ENCODE measurements at regions of chrX and their contacts with region 1.

Region 1: GRCh38 chrX:136170134-136170800 is 22.9 kb downstream of the FHL1 start:
- DNase-seq: no peak
- H3K4me3 ChIP-seq: peak overlapping the region; percentile 24 to 42 (median 36)
- H3K27ac ChIP-seq: peak overlapping the region; percentile 84 to 99 (median 96)
- H3K4me1 ChIP-seq: peaks cover 36 to 95% (median 83%) of the 10 kb centered on the region in 4 donors
- H3K27me3 ChIP-seq: no peaks in the 10 kb centered on the region
- CTCF ChIP-seq: peak; percentile 20 to 40 (median 40)
- EP300 ChIP-seq: no peak
- POLR2A ChIP-seq: no peak

Region 2: GRCh38 chrX:136200466-136200865 is 30.2 kb after region 1 on chrX:
- intact Hi-C with region 1: no loop called
- DNase-seq: no peak
- H3K4me3 ChIP-seq: peak overlapping the region; percentile 44 to 55 (median 52)
- H3K27ac ChIP-seq: peak overlapping the region; percentile 86 to 99 (median 96)
- H3K4me1 ChIP-seq: peaks cover 45 to 67% (median 53%) of the 10 kb centered on the region in 4 donors
- H3K27me3 ChIP-seq: no peaks in the 10 kb centered on the region
- CTCF ChIP-seq: peak; percentile 17 to 33 (median 31)
- EP300 ChIP-seq: no peak
- POLR2A ChIP-seq: no peak

Region 3: DNA sequence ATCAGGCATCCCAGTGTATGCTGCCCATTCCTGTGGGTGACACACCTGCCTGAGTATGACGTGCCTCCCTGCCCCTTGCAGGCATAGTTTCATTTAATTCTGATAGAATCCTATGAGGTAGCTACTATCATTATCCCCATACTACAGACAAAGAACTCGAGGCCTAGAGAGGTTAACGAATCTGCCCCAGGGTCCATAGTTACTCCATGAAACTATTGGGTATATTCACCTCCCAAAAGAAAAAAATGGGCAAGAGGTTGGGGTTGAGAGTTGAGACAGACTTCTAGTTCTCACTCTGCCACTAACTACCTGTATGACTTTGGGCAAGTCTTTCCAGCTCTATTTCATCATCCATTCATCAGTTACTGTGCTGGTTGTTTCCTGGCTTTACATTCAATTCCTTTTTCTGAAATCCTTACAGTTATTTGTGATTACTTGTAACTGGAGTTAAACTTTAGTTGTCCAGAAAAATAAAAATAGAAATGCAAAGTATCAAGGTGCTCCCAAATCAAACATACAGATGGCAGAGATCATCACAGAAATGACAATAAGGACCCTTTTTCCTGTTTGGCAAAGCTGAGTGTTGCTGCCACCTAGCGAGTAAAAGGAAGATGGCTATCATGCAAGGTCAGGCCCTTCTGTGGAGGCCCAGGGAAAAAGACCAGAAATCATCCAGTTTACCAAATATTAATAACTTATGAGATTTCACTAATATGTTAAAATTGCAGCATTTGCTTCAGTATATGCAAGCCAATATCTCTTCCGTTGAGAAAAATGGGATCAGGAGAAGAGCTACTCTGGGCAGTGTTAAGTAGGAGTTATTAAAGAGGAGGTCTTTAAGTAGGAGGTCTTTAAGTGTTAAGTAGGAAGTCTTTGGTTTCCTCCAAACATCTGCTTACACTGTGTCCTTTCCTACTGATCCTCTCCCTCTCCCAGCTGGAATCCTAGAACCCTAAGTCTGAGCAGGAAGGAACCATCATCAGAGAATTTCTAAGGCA is 98.1 kb after region 1 on chrX:
- intact Hi-C with region 1: loop called (anchors 5 kb)
- DNase-seq: no peak
- H3K4me3 ChIP-seq: no peak overlapping the region
- H3K27ac ChIP-seq: no peak overlapping the region
- H3K4me1 ChIP-seq: no peaks in the 10 kb centered on the region
- H3K27me3 ChIP-seq: no peaks in the 10 kb centered on the region
- CTCF ChIP-seq: peak; percentile 74 to 79 (median 79)
- EP300 ChIP-seq: no peak
- POLR2A ChIP-seq: no peak

Measured in esophagus muscularis mucosa (tissue), 4 donors.